Tibial artery (tissue), 4 donors: ENCODE measurements at regions of chr22 and their contacts with region 1.

Region 1: GRCh38 chr22:23044570-23044969 is 25.7 kb upstream of the GNAZ start:
- DNase-seq: no peak
- H3K4me3 ChIP-seq: no peak overlapping the region
- H3K27ac ChIP-seq: no peak overlapping the region
- H3K4me1 ChIP-seq: no peaks in the 10 kb centered on the region
- H3K27me3 ChIP-seq: peaks cover 0 to 9% of the 10 kb centered on the region in 2 donors
- CTCF ChIP-seq: no peak

Region 2: GRCh38 chr22:22818861-22819855 is 225.4 kb before region 1 on chr22:
- intact Hi-C with region 1: no loop called
- DNase-seq: no peak
- H3K4me3 ChIP-seq: no peak overlapping the region
- H3K27ac ChIP-seq: no peak overlapping the region
- H3K4me1 ChIP-seq: no peaks in the 10 kb centered on the region
- H3K27me3 ChIP-seq: peaks cover 0 to 22% of the 10 kb centered on the region in 2 donors
- CTCF ChIP-seq: no peak

Region 3: DNA sequence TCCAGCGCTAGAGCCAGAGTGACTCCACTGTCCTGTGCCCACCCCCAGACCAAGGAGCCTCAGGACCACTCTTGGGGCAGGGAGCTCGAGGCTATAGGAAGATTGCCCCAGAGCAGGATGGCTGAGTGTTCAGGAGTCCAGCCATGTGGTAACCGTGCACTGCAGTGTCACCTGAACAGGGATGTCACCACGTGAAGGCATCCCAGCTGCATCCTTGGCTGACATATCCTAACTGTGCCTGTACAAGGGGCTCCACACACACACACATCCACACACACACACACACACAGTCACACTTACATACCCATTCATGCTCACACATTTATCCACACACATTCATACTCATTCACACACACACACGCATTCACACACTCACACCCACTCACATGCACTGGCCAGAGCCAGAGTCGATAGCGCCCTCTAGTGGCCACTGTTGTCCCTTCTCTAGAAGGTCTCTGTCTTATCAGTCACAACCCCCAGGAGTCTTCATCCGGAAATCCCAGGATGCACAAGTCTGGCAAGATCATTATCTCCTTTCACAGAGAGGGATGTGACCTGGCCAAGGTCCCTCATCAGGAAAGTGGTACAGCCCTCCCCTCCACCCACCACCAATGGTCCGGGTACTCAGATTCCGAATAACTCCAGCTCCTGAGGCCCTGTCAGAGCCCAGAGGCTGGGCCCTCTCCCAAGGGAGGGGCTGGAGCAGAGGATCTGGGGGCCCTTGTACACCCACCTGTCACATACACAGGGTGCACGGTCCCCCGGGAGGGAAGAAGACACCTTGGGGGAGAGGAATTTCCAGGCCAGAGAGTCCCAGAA is 101.8 kb before region 1 on chr22:
- intact Hi-C with region 1: no loop called
- DNase-seq: peak; percentile 30 to 53
- H3K4me3 ChIP-seq: no peak overlapping the region
- H3K27ac ChIP-seq: no peak overlapping the region
- H3K4me1 ChIP-seq: no peaks in the 10 kb centered on the region
- H3K27me3 ChIP-seq: peaks cover 0 to 31% of the 10 kb centered on the region in 2 donors
- CTCF ChIP-seq: peak in 1 of 2 experiments; percentile 49

Region 4: GRCh38 chr22:24099666-24100065 is 1055.1 kb after region 1 on chr22:
- intact Hi-C with region 1: loop called (anchors 5 kb)
- DNase-seq: peak; percentile 8 to 29
- H3K4me3 ChIP-seq: no peak overlapping the region
- H3K27ac ChIP-seq: no peak overlapping the region
- H3K4me1 ChIP-seq: peaks cover 0 to 14% (median 6%) of the 10 kb centered on the region in 4 donors
- H3K27me3 ChIP-seq: no peaks in the 10 kb centered on the region
- CTCF ChIP-seq: no peak